GM10248 (cell line): ENCODE measurements at regions of chr7 and their contacts with region 1.

Region 1: DNA sequence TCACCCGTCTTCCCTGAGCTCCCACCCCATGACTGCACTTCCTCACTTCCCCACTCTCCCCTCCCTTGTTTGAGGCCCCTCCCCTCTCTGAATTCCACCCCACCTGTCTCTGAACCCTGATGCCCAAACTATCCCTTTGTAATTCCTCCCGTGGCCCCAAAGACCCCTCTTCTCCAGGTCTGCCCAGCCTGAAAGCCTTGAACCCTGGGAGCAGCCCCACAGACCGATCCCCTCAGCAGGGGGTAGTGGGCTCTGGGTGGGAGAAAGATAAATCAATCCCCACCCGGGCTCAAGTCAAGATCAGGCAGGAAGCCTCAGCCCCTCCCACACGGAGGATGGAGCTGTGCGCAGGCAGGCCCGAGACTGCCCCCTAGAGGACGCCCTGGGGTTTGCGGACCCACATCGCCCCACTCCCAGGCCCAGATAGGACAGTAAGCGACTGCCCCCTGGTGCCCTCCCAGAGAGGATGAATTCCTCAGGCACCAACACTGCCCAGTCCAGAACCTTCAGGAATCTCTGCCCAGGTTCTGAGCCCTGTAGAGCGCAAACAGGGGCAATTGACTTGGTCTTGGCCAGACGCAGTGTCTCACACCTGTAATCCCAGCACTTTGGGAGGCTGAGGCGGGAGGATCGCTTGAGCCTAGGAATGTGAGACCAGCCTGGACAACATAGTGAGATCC is 11.7 kb downstream of the HSPB1 start:
- DNase-seq: peak; percentile 92
- CTCF ChIP-seq: peak; percentile 100

Region 2: GRCh38 chr7:76142861-76143260 is 171.3 kb before region 1 on chr7:
- CTCF ChIA-PET with region 1: no interaction called
- POLR2A ChIA-PET with region 1: no interaction called
- DNase-seq: no peak
- CTCF ChIP-seq: no peak

Region 3: GRCh38 chr7:76166404-76167255 is 147.6 kb before region 1 on chr7:
- CTCF ChIA-PET with region 1: interaction called, 13 read pairs
- POLR2A ChIA-PET with region 1: no interaction called
- DNase-seq: peak; percentile 93
- CTCF ChIP-seq: no peak

Region 4: DNA sequence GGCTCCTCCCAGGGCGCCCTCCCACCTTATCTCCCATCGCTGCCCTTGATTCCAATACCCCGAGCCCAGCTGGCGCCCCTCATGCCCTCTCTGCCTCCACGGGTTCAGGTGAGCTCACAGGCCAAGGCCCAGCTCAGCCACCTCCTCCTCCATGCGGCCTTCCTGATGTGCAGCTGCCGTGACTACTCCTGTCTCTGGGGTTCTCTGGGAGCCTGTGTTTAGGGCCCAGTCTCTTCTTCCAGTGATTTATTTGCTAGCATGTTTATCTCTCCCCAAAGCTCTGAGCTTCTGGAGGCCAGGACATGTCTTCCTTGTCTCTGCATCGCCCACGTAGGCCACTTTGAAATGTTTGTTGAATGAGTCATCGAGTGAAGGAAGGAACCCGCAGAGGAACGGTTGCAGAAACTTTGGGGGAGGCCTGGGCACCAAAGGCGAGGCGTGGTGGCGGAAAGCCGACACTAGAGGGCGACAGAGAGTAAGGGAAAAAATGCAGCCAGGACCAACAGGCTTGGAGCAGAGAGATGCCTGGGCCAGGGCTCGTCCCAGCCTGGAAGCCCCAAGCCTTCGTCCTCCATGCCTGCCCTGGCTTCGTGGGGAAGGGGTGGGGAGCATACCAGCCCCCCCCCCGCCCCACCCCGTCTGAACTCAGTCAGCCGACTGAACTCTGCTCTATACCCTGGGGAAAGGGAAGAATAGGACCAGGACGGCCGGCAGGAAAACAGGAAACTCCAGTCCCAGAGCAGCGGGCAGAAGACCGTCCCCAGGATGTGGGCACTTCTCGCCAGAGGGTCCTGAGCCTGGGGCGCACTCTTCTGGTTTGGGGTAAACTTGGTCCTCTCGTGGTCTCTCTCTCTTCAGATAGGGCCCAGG is 22.6 kb before region 1 on chr7:
- CTCF ChIA-PET with region 1: interaction called, 339 read pairs
- POLR2A ChIA-PET with region 1: interaction called, 4 read pairs
- DNase-seq: peak; percentile 92
- CTCF ChIP-seq: peak; percentile 98

Region 5: DNA sequence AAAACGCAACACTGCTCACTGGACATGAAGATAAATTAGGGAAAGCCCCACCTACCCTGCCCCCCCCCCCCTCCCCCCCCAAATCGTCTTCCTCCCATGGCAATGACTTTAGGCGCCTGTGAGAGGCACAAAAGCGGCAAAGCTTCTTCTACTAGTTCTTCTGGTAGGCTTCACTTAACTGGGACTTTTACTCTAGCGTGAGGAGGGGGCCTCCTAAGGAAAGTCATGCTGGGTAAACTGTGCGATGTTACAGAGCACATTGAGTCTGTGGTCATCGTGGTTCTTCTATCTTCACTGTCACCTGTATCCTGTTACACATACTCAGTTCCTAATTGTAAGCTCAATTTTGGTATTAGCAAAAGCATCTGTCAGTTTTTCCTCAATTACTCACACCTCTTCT is 13.4 kb after region 1 on chr7:
- CTCF ChIA-PET with region 1: interaction called, 19 read pairs
- POLR2A ChIA-PET with region 1: interaction called, 7 read pairs
- DNase-seq: no peak
- CTCF ChIP-seq: no peak

Region 6: DNA sequence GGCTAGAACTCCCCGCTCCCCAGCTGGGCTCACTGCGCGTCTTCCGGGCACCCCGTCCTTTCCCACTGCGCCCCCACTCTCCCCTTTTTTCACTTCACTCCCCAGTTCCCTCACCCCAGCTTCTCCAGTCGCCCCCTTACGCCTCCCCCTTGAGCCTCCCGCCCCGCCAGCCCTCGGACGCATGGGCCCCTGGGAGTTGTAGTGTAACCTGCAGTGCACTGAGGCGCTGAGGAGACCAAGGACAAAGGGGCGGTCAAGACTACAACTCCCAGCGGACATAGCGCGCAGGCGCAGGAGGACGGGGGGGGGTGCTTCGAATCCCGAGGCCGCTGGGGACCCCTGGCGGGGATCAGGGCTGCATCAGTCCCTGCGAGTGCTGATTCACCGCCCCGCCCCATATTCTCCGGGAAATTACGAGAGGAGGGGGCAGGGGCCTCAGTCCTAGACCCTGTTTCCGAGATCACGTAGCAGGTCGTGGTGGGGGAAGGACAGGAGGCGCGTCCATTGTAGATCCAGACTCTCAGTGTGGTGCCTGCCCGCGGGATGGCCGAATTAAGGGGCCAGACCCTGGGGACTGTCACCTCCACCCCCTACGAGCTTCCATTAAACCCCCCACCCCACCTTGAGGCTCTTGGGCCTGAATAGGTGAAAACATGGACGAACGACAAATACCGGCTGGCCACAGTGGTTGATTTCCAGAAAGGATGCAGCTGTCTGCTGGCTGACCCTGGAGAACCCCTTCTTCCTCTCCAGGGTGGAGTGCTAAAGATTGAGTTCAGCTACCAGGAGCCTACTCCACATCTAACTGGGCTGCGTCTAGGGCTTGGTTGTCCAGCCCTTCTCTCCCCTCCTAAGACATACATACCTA is 45.2 kb after region 1 on chr7:
- CTCF ChIA-PET with region 1: interaction called, 17 read pairs
- POLR2A ChIA-PET with region 1: interaction called, 3 read pairs
- DNase-seq: peak; percentile 97
- CTCF ChIP-seq: peak; percentile 82